Common myeloid progenitor, CD34-positive (primary cell): ENCODE measurements at regions of chr3 and their contacts with region 1.

Region 1: GRCh38 chr3:86982883-86983282 is 8.1 kb downstream of the VGLL3 start:
- DNase-seq: no peak
- H3K4me3 ChIP-seq: no peak overlapping the region
- H3K27ac ChIP-seq: no peak overlapping the region
- H3K4me1 ChIP-seq: no peaks in the 10 kb centered on the region
- H3K27me3 ChIP-seq: peaks cover 0 to 14% (median 6%) of the 10 kb centered on the region in 5 experiments

Region 2: DNA sequence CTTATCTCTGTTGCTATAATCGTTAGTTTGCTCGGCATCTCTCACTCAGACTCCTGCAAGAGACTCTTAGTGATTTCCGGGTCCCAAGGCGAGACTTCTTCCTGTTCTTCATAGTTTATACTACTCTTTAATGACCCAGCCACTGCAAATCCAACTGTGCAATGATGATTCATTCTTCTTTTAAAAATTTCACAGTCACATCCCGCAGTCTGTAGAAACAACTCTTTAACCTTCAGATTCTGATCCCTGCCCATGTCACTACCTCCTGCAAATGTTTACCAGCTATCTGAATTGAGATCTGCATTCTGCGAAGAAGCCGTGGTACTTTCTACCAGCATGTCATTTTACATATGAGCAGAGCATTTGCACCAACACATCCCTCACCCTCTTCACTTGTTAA is 10.8 kb after region 1 on chr3:
- CTCF ChIA-PET with region 1: no interaction called
- POLR2A ChIA-PET with region 1: interaction called, 11 read pairs
- DNase-seq: peak in 2 of 3 donors; percentile 19 to 27
- H3K4me3 ChIP-seq: no peak overlapping the region
- H3K27ac ChIP-seq: no peak overlapping the region
- H3K4me1 ChIP-seq: peaks cover 0 to 14% (median 13%) of the 10 kb centered on the region in 4 experiments
- H3K27me3 ChIP-seq: peaks cover 8 to 27% (median 14%) of the 10 kb centered on the region in 5 experiments

Region 3: DNA sequence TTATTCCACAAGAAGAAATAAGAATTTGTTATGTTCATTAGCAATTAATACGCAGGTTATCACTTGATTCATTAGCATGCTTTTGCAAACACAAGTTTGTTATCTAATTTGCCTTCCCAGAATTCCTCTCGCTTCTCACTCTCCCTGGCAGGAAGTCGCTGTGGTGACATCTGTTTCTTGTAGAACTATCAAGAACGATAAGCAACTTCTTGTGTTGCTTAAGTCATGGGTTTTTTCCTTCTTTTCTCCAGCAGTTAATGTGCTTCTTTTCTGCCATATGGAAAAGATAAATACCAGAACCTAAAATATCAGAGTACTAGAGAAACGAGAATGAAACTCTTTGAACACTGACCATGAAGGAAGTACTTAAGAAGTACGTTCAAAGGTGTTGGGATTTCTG is 144.4 kb after region 1 on chr3:
- CTCF ChIA-PET with region 1: no interaction called
- POLR2A ChIA-PET with region 1: no interaction called
- DNase-seq: peak in 1 of 3 donors; percentile 1
- H3K4me3 ChIP-seq: no peak overlapping the region
- H3K27ac ChIP-seq: no peak overlapping the region
- H3K4me1 ChIP-seq: peaks cover 0 to 5% (median 0%) of the 10 kb centered on the region in 4 experiments
- H3K27me3 ChIP-seq: no peaks in the 10 kb centered on the region